ENCODE measurements at regions of chr11 and their contacts with region 1.

Region 1: DNA sequence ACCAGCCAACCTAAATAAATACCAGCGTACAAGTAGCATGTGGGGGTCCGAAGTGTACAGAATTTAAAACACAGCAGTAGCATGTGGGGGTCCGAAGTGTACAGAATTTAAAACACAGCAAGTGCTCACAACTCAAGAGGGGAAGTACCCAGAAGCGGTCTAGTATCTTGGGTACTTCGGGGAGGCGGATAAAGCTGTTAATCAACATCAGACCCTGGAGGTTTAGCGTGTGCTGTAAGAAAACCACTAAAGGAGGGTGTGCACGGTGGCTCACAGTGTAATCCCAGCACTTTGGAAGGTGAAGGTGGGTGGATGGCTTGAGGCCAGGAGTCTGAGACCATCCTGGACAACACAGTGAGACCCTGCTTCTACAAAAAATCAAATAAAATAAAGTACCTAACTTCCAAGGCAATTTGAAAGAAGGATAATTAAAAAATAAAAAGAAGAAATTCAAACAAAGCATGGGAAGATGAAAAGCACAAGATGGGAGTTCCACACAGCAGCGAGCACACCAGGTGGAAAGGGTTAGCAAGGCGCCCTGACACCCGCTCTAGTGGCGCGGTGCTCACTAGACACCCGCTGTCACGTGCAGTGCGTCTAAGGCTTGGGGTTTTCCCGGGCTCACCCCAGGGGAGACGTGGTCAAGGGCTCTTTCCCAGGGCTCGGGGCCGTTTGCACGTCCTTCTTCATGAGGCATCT is 35.0 kb upstream of the MOB2 start:
- DNase-seq: no peak
- H3K4me3 ChIP-seq: no peak overlapping the region
- H3K27ac ChIP-seq: no peak overlapping the region
- H3K4me1 ChIP-seq: 0 out of 7 replicates have a peak, but pooled peaks cover 0 to 2% (median 0%) of the 10 kb centered on the region in 4 experiments
- H3K27me3 ChIP-seq: no peaks in the 10 kb centered on the region
- CTCF ChIP-seq: no peak
- EP300 ChIP-seq: no peak
- POLR2A ChIP-seq: no peak
- RAD21 ChIP-seq: no peak

Region 2: DNA sequence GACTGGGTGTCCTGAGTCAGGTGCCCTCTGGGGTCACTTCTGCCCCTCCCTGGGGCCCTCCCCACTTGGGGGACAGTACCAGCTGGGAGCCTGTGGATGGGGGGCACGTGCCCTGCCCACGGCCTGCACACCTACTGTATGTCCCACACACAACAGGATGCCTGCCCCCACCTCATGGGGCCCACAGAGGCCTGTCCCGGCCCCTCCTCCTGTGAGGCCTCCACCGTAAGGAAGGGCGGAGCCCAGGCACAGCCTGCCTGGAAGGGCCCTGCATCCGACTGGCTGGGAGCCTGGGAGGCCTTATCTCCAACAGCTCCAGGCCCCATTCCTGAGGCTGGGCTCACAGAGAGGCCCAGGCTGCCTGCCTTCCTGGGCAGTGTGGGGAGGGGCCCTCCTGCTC is 84.0 kb before region 1 on chr11:
- CTCF ChIA-PET with region 1: no interaction called
- POLR2A ChIA-PET with region 1: no interaction called
- DNase-seq: no peak
- H3K4me3 ChIP-seq: no peak overlapping the region
- H3K27ac ChIP-seq: no peak overlapping the region
- H3K4me1 ChIP-seq: peaks cover 0 to 15% (median 9%) of the 10 kb centered on the region in 4 experiments; a peak in 6 of 7 replicates
- H3K27me3 ChIP-seq: no peaks in the 10 kb centered on the region
- CTCF ChIP-seq: no peak
- EP300 ChIP-seq: no peak
- POLR2A ChIP-seq: no peak
- RAD21 ChIP-seq: no peak

Region 3: GRCh38 chr11:1532014-1532586 is 10.6 kb after region 1 on chr11:
- CTCF ChIA-PET with region 1: interaction called, 21 read pairs
- POLR2A ChIA-PET with region 1: no interaction called
- DNase-seq: no peak
- H3K4me3 ChIP-seq: no peak overlapping the region
- H3K27ac ChIP-seq: no peak overlapping the region
- H3K4me1 ChIP-seq: peaks cover 0 to 2% (median 0%) of the 10 kb centered on the region in 4 experiments; a peak in 1 of 7 replicates
- H3K27me3 ChIP-seq: no peaks in the 10 kb centered on the region
- CTCF ChIP-seq: no peak
- EP300 ChIP-seq: no peak
- POLR2A ChIP-seq: no peak
- RAD21 ChIP-seq: no peak